Gastrocnemius medialis (tissue), 4 donors: ENCODE measurements at regions of chr1 and their contacts with region 1.

Region 1: DNA sequence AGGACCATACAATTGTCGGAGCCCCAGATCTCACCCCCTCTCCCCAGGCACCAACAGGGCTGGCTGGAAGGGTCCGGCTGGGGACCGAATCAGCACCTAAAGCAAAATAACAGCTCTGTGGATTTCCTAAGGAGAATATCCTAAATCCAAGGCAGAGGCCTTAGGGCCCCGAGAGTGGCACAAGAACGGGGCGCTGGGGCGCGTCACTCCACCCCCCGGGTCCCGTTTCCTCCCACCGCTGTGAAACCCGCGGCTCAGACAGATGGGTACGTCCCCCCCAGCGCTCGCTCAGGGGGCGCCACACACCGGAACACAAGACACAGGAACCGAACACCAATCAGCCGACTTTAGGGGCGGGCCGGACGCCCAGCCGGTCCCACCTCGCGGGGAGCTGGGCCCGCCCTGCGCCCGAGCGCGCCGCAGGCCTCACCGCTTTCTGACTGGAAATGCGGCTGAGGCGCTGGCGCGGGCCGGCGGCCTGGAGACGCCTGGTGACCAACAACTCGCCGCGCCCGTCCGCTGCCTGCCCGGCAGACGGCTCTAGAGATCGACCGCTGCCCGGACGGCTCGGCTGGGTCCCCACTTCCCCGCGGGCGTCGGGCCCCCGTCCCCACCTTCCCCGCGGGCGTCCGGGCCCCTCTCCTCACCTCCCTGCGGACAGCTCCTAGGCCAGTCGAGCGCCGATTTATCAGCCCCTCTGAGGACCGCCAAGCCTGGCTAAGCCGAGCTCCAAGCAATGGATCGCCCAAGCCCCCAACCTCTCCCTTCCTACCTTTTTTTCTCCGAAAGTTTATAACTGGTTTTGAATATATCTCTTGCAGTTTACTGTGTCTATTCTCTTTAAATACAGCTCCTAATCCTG is at the start of gene HFM1:
- DNase-seq: peak; percentile 40 to 68
- ATAC-seq: peak; percentile 91 to 92
- H3K4me3 ChIP-seq: peak within 1 kb of the TSS; percentile 67 to 79 (median 74)
- H3K27ac ChIP-seq: peak within 1 kb of the TSS; percentile 84 to 93 (median 90)
- H3K4me1 ChIP-seq: peaks cover 0 to 4% of the 10 kb centered on the region in 2 donors
- H3K27me3 ChIP-seq: no peaks in the 10 kb centered on the region
- CTCF ChIP-seq: no peak
- POLR2A ChIP-seq: peak; percentile 41 to 53
- total RNA-seq, gene HFM1: 0.58 to 1.9 (median 1.4) TPM

Region 2: DNA sequence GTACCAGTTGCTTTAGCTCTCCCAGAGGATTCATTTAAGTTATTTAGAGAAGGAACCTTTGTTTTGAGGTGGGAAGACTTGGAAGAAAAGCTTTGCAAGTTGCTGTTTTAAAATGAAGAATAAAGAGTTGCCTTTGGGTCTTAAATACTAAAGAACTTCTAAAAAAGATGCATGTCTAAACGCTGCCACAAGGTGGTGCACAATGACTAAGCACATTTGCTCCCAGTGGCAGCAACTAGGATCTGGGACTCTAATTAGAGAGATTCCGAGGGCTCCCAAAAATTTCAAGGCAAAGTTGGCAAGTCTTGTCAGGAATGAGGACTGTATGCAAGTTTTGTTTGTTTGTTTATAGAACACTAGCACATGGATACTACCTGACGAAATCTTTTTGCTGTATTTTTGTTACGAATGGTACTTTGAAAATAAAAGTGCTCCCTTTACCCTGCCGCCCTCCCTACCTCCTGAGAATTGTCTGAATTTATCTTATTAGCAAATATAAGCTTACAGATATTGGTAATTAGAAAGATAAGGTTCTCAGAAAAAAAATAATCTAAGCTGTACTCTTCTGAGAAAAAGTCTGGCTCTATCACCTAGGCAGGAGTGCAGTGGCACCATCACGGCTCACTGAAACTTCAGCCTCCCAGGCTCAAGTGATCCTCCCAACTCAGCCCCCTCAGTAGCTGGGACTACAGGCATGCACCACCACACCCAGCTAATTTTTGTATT is 121.5 kb before region 1 on chr1:
- in situ Hi-C with region 1: loop called in 1 of 4 experiments (anchors 5 kb)
- intact Hi-C with region 1: loop called (anchors 2 kb)
- DNase-seq: peak; percentile 41 to 47
- ATAC-seq: peak; percentile 86
- H3K4me3 ChIP-seq: peak overlapping the region; percentile 22 to 44 (median 32)
- H3K27ac ChIP-seq: peak overlapping the region; percentile 33 to 58 (median 46)
- H3K4me1 ChIP-seq: peaks cover 9 to 13% of the 10 kb centered on the region in 2 donors
- H3K27me3 ChIP-seq: no peaks in the 10 kb centered on the region
- CTCF ChIP-seq: peak; percentile 59 to 87 (median 80)
- POLR2A ChIP-seq: no peak

Region 3: DNA sequence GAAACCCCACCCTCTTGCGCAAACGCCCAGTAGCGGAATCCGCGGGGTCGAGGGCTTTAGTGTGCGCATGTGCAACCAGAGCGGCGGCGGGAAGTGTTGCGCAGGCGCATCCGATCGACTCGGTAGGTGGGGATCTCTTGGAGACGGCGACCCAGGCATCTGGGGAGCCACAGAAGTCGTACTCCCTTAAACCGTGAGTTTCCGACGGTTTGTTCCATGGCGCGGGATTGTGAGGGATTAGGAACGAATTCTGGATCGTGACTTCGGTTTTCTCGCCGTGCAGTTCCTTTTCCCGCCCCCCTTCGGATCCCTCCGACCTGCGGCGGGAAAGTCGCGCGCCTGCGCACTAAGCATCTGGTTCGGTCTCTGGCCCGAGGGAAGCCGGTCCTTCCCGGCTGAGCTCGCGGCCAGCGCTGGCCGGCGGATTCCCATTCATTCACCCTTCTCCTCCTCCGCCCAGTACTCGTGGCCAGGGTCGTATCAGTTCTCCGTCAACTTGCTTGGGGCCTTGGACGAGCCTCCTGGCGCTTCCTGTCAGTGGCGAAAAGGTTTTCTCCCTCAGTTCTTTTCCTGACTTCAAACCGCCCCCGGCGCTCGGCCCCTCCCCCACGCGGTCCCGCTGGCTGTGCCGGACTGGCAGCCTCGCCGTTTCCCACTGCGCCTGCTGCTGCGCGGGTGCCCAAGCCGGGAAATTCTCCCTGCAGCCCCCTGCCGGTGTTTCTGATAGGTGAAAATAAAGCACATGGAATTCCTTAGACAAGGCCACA is 96.6 kb after region 1 on chr1 and contains the start of gene CDC7:
- in situ Hi-C with region 1: no loop called
- intact Hi-C with region 1: loop called (anchors 5 kb)
- DNase-seq: peak; percentile 58 to 75
- ATAC-seq: peak; percentile 91 to 95
- H3K4me3 ChIP-seq: peak within 1 kb of the TSS; percentile 59 to 79 (median 72)
- H3K27ac ChIP-seq: peak within 1 kb of the TSS; percentile 61 to 75 (median 71)
- H3K4me1 ChIP-seq: peaks cover 7 to 15% of the 10 kb centered on the region in 2 donors
- H3K27me3 ChIP-seq: no peaks in the 10 kb centered on the region
- CTCF ChIP-seq: peak in 2 of 5 experiments; percentile 23 to 35
- POLR2A ChIP-seq: no peak
- total RNA-seq, gene CDC7: 0.10 to 0.44 (median 0.20) TPM in 3 of 4 donors, not detected in the other

Region 4: DNA sequence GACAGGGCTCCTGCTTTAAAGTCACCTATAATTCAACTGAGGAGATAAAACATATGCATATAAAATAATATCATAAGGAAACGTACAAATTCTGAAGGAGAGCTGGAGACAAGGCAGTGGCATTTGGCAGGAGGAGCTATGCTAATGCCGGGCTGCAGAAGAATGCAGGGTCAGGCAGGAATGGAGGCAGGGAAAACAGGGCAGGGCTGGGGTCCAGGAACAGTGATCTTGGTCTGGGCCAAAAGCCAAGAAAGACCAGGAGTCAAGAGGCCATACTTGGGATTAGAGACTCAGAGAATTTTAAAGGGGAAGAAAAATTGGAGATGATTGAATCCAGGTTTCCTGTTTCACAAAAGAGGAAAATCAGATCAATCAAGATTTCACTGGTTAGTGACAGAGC is 524.9 kb after region 1 on chr1:
- in situ Hi-C with region 1: no loop called
- intact Hi-C with region 1: loop called (anchors 5 kb)
- DNase-seq: no peak
- ATAC-seq: no peak
- H3K4me3 ChIP-seq: no peak overlapping the region
- H3K27ac ChIP-seq: no peak overlapping the region
- H3K4me1 ChIP-seq: no peaks in the 10 kb centered on the region
- H3K27me3 ChIP-seq: no peaks in the 10 kb centered on the region
- CTCF ChIP-seq: no peak
- POLR2A ChIP-seq: no peak

Region 5: DNA sequence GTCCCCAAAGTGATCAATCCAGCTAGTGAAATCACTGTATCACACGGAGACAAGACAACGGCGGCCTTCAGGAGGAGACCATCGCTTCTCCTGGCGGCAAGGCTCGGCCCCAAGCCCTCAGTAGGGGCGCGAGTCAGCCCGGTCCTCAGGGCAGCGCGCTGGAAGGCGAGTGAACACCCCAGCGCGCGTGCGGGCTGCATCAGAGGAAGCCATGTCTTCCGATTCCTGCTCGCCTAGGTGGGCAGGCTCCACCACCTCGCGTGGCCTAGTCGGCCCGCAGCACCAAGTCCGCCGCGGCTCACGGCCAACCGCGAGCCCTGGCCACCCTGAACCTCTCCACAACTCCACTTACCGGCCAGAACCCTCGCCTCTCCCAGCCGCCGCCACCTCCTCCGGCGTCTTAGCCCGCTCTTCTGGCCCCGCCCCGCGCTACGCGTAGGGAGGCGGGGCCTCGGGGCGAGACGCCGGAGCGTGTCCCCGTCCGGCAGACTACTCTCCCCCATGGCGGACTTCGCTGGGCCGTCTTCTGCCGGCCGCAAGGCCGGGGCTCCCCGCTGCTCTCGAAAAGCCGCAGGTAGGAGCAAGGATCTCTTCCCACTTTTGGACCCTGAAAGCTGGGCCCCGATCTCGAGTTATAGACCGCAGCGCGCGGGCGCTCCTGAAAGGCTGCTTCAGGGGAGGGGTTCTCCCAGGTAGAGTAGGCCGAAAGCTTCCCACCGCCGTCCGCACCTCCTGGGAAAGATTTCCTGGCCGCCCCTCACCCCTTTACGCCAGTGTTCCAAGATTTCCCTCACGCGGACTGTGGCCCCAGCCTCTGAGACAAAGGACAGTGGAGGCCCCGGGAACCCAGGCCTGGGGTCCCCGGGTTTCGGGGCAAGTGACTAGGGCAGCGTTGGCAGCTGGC is 894.4 kb after region 1 on chr1 and contains the starts of genes GLMN and RPAP2:
- in situ Hi-C with region 1: no loop called
- intact Hi-C with region 1: loop called (anchors 10 kb)
- DNase-seq: peak; percentile 49 to 65
- ATAC-seq: peak; percentile 97 to 98
- H3K4me3 ChIP-seq: peak within 1 kb of the TSS; percentile 80 to 95 (median 90)
- H3K27ac ChIP-seq: peak within 1 kb of the TSS; percentile 89 to 96 (median 94)
- H3K4me1 ChIP-seq: peaks cover 13 to 16% of the 10 kb centered on the region in 2 donors
- H3K27me3 ChIP-seq: no peaks in the 10 kb centered on the region
- CTCF ChIP-seq: no peak
- POLR2A ChIP-seq: peak; percentile 72 to 73
- total RNA-seq, gene GLMN: 2.6 to 9.5 (median 5.2) TPM
- total RNA-seq, gene RPAP2: 11.4 to 19.1 (median 14.7) TPM